ENCODE measurements at regions of chr5 and their contacts with region 1.

Region 1: GRCh38 chr5:157159209-157159751 is 6.8 kb downstream of the GARIN3 start:
- DNase-seq: no peak
- ATAC-seq: no peak
- H3K4me3 ChIP-seq: no peak overlapping the region
- H3K4me3 Mint-ChIP-seq: no peak overlapping the region
- H3K27ac ChIP-seq: no peak overlapping the region
- H3K27ac Mint-ChIP-seq: no peak overlapping the region
- H3K4me1 ChIP-seq: no peaks in the 10 kb centered on the region
- H3K4me1 Mint-ChIP-seq: no peaks in the 10 kb centered on the region
- H3K27me3 ChIP-seq: no peaks in the 10 kb centered on the region
- H3K27me3 Mint-ChIP-seq: no peaks in the 10 kb centered on the region
- CTCF ChIP-seq: no peak

Region 2: DNA sequence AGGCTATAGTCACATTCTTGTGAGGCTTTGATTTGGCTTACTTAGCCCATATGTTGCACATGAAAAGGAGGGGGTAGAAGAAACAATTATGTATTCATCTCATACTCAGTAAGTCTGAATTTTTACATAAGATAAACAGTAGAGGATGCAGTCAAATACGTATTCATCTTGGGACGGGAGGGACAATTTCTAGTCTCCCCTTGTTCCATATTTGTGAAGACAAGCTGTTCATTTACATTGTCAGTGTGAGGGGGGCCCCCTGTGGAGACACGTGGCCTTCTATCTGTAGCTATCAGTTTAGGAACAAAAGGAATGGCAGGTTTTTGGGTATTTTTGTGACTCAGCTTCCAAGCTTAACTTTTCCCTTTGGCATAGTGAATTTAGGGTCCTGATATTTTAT is 358.4 kb before region 1 on chr5:
- CTCF ChIA-PET with region 1: no interaction called
- POLR2A ChIA-PET with region 1: no interaction called
- intact Hi-C with region 1: no loop called
- DNase-seq: no peak
- ATAC-seq: no peak
- H3K4me3 ChIP-seq: no peak overlapping the region
- H3K4me3 Mint-ChIP-seq: no peak overlapping the region
- H3K27ac ChIP-seq: no peak overlapping the region
- H3K27ac Mint-ChIP-seq: no peak overlapping the region
- H3K4me1 ChIP-seq: no peaks in the 10 kb centered on the region
- H3K4me1 Mint-ChIP-seq: no peaks in the 10 kb centered on the region
- H3K27me3 ChIP-seq: peaks cover 0 to 6% (median 4%) of the 10 kb centered on the region in 4 experiments
- H3K27me3 Mint-ChIP-seq: peaks cover 34% of the 10 kb centered on the region
- CTCF ChIP-seq: no peak

Region 3: GRCh38 chr5:157204765-157205164 is 45.5 kb after region 1 on chr5:
- CTCF ChIA-PET with region 1: no interaction called
- POLR2A ChIA-PET with region 1: no interaction called
- intact Hi-C with region 1: loop called (anchors 10 kb)
- DNase-seq: peak; percentile 67
- ATAC-seq: peak; percentile 53
- H3K4me3 ChIP-seq: no peak overlapping the region
- H3K4me3 Mint-ChIP-seq: no peak overlapping the region
- H3K27ac ChIP-seq: peak overlapping the region in 1 of 2 donors; percentile 34
- H3K27ac Mint-ChIP-seq: peak overlapping the region; percentile 59
- H3K4me1 ChIP-seq: peaks cover 12% of the 10 kb centered on the region in 2 donors
- H3K4me1 Mint-ChIP-seq: peaks cover 8% of the 10 kb centered on the region
- H3K27me3 ChIP-seq: no peaks in the 10 kb centered on the region
- H3K27me3 Mint-ChIP-seq: no peaks in the 10 kb centered on the region
- CTCF ChIP-seq: no peak

Region 4: DNA sequence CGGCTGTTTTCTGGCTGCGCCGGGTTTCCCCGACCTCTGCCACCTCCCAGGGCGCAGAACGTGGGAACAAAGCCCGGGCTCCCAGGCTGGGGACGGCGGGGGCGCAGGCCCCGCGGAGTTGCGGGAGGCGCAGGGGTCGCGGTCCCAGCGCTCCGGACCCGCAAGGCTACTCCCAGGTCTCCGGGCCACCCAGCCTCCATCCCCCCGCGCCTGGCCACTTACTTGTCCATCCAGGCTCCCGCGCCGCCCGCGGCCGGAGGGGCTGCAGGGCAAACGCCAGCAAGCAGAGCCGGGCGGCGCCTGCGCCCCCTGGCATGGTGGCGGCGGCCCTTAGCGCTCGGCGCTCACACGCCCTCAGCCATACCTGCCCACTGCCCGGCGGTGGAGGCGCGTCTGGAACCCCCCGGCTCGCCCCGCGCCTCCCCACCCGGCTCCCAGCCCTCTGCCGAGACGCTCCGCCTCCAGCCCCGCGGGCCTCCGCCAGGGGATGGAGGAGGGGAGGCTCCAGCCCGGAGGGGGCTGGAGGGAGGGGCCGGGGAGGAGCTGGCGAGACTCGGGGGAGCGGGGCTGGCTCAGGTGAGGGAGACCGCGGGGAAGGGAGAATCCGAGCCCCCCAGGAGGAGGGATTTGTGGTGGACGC is 416.2 kb after region 1 on chr5 and contains the start of gene ADAM19:
- CTCF ChIA-PET with region 1: no interaction called
- POLR2A ChIA-PET with region 1: no interaction called
- intact Hi-C with region 1: no loop called
- DNase-seq: peak; percentile 67
- ATAC-seq: peak; percentile 47
- H3K4me3 ChIP-seq: peak within 1 kb of the TSS; percentile 94 to 99 (median 99)
- H3K4me3 Mint-ChIP-seq: peak within 1 kb of the TSS; percentile 96
- H3K27ac ChIP-seq: peak within 1 kb of the TSS; percentile 79 to 84
- H3K27ac Mint-ChIP-seq: peak within 1 kb of the TSS; percentile 95
- H3K4me1 ChIP-seq: peaks cover 44 to 65% of the 10 kb centered on the region in 2 donors
- H3K4me1 Mint-ChIP-seq: peaks cover 70% of the 10 kb centered on the region
- H3K27me3 ChIP-seq: no peaks in the 10 kb centered on the region
- H3K27me3 Mint-ChIP-seq: no peaks in the 10 kb centered on the region
- CTCF ChIP-seq: peak; percentile 18
- total RNA-seq, gene ADAM19: 171 TPM in 2 replicates

Measured in B cell (primary cell).